HEK293 (cell line): ENCODE measurements at regions of chr14 and their contacts with region 1.

Region 1: DNA sequence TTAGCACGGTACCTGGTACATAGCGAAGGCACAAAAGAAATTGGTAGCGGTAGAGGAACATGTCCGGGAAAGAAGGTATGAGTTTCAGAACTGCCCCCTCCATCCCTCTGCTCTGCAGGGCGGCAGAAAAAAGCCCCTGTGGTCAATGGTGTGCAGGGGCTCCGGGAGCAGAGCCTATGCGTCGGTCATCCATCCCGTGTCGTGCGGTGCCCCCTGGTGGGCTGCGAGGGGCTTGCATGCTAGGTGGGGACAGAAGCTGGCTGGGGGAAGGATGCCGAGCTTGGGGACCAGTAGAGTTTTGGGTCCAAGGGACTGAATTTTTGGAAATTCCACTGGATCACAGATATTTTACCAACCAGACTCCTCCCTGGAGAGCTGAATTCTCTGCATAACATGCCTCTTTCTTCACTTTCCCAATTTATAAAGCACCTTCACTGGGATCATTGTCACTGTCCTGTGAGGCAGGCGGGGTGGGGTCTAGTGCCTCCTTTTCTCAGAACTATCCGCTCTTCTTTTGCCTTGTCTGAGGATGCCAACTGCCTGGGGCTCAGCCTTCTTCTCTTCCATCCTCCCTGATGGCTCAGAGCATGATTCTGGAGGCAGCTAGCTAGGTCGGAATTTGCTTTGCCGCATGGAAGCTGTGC is 148.7 kb downstream of the SMOC1 start:
- H3K4me3 ChIP-seq: no peak overlapping the region
- H3K27ac ChIP-seq: no peak overlapping the region
- H3K4me1 ChIP-seq: no peaks in the 10 kb centered on the region
- CTCF ChIP-seq: peak; percentile 75; the same call in 1 of the 2 replicates

Region 2: DNA sequence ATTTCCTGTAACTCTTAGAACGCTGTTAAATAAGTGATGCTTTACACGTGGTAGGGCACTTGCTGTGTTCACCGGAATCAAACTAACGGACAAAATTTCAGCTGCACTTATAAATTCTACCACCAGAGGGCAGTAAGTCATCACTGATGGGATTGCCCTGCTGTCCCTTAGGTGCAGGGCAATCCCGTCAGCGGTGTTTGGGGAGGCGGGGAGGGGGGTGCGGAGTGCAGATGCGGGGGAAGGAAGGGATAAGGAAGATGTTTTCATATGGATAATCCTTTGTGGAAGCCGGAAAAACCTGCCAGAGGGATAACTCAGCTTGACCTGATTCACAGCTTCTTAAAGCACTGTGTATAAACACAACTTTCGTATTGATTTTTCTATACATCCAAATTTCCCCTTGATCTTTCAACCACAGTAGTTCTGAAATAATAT is 209.1 kb before region 1 on chr14:
- CTCF ChIA-PET with region 1: interaction called, 117 read pairs
- POLR2A ChIA-PET with region 1: no interaction called
- H3K4me3 ChIP-seq: no peak overlapping the region
- H3K27ac ChIP-seq: no peak overlapping the region
- H3K4me1 ChIP-seq: no peaks in the 10 kb centered on the region
- CTCF ChIP-seq: peak; percentile 55; the same call in 1 of the 2 replicates

Region 3: DNA sequence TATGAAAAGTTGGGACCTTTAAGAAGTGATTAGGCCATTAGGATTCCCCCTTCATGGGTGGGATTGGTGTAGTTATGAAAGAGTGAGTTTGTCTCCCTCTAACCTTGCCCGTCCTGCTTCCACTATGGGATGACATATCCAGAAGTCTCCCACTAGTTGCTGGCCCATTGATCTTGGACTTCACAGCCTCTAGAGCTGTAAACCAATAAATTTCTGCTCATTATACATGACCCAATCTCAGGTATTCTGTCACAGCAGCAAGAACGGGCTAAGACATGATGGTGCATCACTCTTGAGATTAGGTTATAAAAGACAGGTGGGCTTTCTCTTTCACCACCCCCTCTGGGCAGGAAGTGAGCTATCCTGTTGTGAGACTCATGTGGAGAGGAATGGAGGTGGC is 157.3 kb before region 1 on chr14:
- CTCF ChIA-PET with region 1: interaction called, 14 read pairs
- POLR2A ChIA-PET with region 1: no interaction called
- H3K4me3 ChIP-seq: no peak overlapping the region
- H3K27ac ChIP-seq: no peak overlapping the region
- H3K4me1 ChIP-seq: no peaks in the 10 kb centered on the region
- CTCF ChIP-seq: no peak

Region 4: GRCh38 chr14:71988939-71989338 is 1961.0 kb after region 1 on chr14:
- CTCF ChIA-PET with region 1: no interaction called
- POLR2A ChIA-PET with region 1: no interaction called
- H3K4me3 ChIP-seq: no peak overlapping the region
- H3K27ac ChIP-seq: no peak overlapping the region
- H3K4me1 ChIP-seq: peaks cover 6% of the 10 kb centered on the region
- CTCF ChIP-seq: no peak